Common myeloid progenitor, CD34-positive (primary cell): ENCODE measurements at regions of chr2 and their contacts with region 1.

Region 1: DNA sequence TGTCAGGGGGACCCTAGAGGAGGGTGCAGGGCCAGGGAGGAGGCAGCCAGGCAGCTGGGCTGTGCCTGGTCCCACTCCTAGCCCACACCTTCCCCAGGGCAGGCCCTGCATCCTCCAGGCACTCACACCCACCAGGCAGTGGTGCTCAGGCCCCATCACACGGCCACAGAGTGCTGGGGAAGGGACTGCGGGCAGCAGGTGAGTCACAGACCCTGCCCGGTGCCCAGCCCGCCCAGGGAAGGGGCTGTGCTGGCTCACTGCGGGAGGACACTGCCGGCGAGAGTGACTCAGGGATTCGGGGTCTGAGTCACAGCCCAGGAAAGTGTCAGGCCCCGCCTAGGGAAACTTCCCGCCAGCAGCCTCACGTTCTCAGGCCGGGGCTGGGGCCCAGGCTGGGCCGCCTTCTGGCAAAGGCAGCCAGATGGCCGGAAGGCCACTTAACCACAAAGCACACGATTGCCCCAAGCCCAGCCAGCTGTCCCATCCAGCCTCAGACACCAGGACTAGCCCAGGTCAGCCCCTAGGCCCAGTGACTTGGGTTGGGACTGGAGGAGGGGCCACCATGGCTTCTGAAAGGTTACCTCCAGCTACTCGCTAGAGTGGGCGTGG is 42.2 kb downstream of the BIN1 start:
- DNase-seq: peak; percentile 93 to 99 (median 99)
- H3K4me3 ChIP-seq: peak overlapping the region in 1 of 7 experiments; percentile 18
- H3K27ac ChIP-seq: peak overlapping the region; percentile 33 to 69
- H3K4me1 ChIP-seq: peaks cover 0 to 80% (median 58%) of the 10 kb centered on the region in 4 experiments
- H3K27me3 ChIP-seq: no peaks in the 10 kb centered on the region

Region 2: DNA sequence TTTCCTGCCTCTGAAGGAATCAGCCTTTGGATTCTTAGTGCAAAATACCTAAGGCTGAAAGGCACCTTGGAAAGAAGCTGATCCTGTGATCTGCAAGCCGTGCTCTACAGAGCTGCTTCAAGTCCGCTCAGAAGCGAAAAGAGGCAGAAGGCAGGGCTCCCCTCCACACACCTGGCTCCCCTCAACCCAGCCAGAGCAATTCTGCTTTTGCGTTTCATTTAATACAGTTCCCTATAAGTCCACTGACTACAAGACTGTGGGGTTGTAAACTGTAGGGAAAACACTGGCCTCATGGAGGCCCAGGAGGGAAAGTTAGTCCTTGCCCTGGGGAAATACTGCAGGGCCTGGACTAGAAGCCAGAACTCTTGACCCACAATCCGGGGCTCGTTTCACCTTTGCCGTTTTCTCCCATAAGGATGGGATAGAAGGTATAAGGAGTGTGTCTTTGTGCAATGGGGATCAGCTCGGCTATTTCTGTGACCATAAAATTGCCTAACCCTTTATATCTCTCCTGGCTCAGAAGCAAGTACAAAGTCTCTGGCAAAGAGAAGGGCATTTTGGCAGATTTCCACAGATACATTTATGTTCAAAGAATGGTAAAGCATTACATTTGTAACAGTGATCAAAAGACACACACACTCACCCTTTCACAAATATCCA is 261.8 kb before region 1 on chr2:
- CTCF ChIA-PET with region 1: no interaction called
- POLR2A ChIA-PET with region 1: no interaction called
- DNase-seq: no peak
- H3K4me3 ChIP-seq: no peak overlapping the region
- H3K27ac ChIP-seq: no peak overlapping the region
- H3K4me1 ChIP-seq: no peaks in the 10 kb centered on the region
- H3K27me3 ChIP-seq: peaks cover 0 to 6% (median 0%) of the 10 kb centered on the region in 5 experiments

Region 3: DNA sequence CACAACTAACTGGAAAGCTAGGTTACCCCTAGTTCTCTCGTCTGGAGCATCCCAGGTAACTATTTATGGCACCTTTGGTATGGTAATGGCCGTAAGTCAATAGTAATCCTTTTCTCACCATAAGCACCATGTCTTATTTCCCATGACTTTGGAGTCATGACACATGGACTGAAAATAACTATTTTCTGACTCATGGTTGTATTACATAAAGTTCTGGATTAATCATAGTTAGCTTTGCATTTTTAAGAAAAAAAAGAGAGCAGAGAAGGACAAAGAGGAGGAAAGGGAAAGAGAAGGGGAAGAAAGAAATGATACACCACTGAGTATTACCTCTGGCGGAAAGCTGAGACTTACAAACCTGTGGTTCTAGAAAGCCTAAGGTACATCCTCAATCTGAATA is 57.1 kb before region 1 on chr2:
- CTCF ChIA-PET with region 1: no interaction called
- POLR2A ChIA-PET with region 1: no interaction called
- DNase-seq: no peak
- H3K4me3 ChIP-seq: no peak overlapping the region
- H3K27ac ChIP-seq: no peak overlapping the region
- H3K4me1 ChIP-seq: no peaks in the 10 kb centered on the region
- H3K27me3 ChIP-seq: peaks cover 0 to 2% (median 0%) of the 10 kb centered on the region in 5 experiments

Region 4: GRCh38 chr2:127034883-127035611 is 29.7 kb before region 1 on chr2:
- CTCF ChIA-PET with region 1: no interaction called
- POLR2A ChIA-PET with region 1: no interaction called
- DNase-seq: no peak
- H3K4me3 ChIP-seq: no peak overlapping the region
- H3K27ac ChIP-seq: no peak overlapping the region
- H3K4me1 ChIP-seq: peaks cover 0 to 3% (median 0%) of the 10 kb centered on the region in 4 experiments
- H3K27me3 ChIP-seq: no peaks in the 10 kb centered on the region

Region 5: DNA sequence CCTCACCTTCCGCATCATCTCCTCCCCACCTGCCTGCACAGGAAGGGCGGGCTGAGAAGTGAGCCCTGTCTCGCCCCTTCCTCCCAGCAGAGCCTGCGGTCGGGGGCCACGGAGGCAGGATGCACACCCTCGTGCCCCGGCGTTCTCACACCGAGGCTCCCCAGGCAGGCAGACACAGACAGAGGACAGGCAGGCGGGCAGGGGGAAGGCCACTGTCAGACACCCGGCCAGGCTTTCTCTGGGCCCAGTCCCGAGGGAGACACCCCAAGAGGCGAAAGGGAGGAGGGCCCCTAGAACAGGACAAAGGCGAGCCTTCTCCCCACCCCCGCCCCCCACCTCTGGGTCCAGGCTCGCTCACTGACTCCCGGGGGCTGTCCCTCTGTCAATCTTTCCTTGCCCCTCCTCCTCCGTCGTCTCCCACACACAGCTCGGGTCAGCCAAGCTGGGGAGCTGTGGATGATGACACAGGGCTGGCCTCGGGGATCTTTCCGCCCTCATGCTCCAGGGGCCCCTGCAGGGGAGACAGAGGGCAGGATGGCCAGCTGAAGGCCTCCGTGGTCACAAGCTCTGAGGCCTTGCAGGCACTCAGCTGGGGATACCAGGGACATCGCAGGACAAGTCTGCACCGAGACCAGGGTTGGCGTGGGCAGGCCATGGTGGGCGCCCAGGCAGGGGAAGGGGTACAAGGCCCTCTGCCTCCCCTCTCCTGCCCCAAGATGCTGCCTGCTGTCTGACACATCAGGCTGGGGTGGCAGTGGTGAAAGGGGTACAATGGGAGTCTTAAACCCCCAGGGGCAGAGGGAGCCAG is 17.3 kb after region 1 on chr2:
- CTCF ChIA-PET with region 1: interaction called, 404 read pairs
- POLR2A ChIA-PET with region 1: interaction called, 3 read pairs
- DNase-seq: peak; percentile 59 to 93 (median 86)
- H3K4me3 ChIP-seq: peak overlapping the region in 5 of 7 experiments; percentile 30 to 66 (median 55)
- H3K27ac ChIP-seq: peak overlapping the region; percentile 56 to 77
- H3K4me1 ChIP-seq: peaks cover 10 to 97% (median 86%) of the 10 kb centered on the region in 4 experiments
- H3K27me3 ChIP-seq: no peaks in the 10 kb centered on the region

Region 6: DNA sequence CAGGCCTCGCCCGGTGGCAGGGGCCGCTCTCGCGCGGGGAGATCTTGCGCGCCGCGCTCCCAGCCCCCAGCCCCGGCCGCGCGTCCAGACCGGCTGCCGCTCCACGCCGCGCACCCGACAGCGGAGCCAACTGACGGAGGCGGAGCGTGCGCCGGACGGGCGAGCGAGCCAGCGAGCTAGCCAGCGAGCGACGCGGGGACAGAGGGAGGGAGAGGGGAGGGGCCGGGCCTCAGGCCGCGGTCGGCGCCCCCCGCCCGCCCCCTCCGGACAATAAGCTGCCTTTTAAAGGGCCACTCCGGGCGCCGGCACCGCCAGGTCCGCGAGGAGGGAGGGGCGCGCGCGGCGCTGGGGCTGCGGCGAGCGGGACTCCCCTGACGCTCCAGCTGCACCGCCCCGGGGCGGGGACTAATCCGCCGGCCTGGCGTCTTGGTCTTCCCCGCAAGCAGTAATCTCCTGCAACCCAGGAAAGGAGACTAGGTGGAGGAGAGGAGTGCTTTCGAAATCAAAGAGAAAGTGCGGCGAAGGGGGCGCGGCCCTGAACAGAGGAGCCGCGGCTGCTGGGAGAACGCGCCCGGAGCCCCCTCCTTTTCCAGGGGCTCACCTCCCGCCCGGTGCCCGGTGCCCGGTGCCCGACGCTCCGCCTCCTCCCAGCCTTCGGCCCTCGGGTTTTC is 42.3 kb after region 1 on chr2 and contains the start of gene BIN1:
- CTCF ChIA-PET with region 1: interaction called, 404 read pairs
- POLR2A ChIA-PET with region 1: no interaction called
- DNase-seq: peak; percentile 80 to 90 (median 87)
- H3K4me3 ChIP-seq: peak within 1 kb of the TSS; percentile 70 to 87 (median 82)
- H3K27ac ChIP-seq: no peak within 1 kb of the TSS
- H3K4me1 ChIP-seq: peaks cover 0 to 71% (median 27%) of the 10 kb centered on the region in 4 experiments
- H3K27me3 ChIP-seq: no peaks in the 10 kb centered on the region

Region 7: DNA sequence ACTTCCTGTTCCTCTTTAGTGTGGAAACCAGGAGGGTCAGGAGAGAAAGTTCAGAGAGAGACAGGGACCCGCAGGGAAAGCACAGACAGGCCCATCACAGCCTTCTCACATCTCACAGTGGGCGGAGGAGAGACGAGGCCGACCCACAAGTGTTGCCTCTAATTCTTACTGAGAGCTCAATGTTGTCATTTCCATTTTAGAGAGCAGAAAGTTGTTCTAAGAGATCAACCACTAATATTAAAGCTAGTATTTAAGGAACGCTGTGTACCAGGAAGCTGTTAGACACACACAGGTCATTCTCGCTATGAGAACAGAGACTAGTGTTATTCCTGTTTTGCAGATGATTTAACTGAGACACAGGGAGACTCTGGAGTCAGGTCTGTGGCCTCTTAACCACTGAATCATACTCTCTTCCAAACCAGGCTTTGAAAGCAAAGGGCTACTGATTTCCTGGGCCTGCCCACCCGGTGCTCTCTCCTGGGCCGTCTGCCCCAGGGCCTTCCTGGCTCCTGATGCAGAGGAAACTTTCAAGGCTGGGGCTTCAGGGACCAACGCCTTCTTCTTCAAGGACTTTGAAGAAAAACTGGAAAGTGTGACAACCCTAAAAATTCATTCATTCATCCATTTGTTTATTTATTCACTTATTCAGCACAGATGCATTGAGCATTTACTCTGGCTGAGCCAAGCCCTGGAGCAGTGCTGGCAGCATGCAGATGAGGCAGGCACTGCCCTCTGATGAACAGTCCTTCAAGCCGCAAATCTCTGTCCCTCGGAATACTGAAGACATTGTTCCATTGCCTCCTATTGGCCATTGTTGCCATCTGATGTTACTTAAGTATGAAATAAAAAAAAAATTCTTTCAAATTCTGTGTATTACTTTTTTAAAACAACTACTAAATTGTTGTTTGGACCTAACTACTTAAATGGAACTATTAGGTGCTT is 79.4 kb after region 1 on chr2:
- CTCF ChIA-PET with region 1: interaction called, 10 read pairs
- POLR2A ChIA-PET with region 1: no interaction called
- DNase-seq: no peak
- H3K4me3 ChIP-seq: no peak overlapping the region
- H3K27ac ChIP-seq: no peak overlapping the region
- H3K4me1 ChIP-seq: peaks cover 0 to 9% (median 2%) of the 10 kb centered on the region in 4 experiments
- H3K27me3 ChIP-seq: no peaks in the 10 kb centered on the region

Region 8: GRCh38 chr2:127174136-127174535 is 109.4 kb after region 1 on chr2:
- CTCF ChIA-PET with region 1: interaction called, 56 read pairs
- POLR2A ChIA-PET with region 1: interaction called, 3 read pairs
- DNase-seq: no peak
- H3K4me3 ChIP-seq: no peak overlapping the region
- H3K27ac ChIP-seq: no peak overlapping the region
- H3K4me1 ChIP-seq: no peaks in the 10 kb centered on the region
- H3K27me3 ChIP-seq: no peaks in the 10 kb centered on the region

Region 9: DNA sequence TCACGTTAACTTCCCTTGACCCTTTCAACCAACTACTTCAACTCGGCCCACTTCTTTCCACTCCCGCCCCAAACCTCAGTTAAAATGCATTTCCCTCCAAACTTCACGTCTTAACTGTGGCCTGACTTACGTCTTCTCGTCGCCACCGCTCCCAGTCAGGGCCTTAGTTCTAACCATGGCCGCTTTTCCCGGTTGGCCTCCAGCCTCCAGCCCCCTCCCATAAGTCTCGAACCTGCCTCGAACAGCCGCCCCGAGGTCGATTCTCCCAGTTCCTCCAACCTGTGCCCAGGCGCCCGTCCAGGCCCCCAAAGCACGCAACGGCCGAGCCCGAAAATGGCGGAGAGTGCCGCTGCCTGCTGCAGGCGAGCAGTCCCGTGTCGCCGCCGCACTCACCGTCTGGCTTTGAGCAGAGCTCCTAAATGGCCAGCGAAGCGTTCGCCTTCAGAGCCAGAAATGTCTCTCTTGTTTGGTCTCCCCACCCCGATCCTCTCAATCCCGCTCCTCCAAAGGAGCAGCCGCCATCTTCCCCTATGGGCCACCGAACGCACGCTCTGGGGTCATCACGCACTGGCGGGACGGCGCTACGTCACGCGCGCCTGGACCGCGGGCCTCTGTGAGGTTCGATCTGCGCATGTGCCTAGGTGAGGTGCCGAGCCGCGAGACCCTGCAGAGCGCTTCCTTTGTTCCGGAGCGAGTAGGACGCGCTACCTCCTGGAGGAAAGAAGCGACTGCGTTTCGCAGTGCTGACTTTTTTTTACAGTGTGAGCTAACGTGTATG is 746.1 kb after region 1 on chr2 and contains the start of gene WDR33:
- CTCF ChIA-PET with region 1: no interaction called
- POLR2A ChIA-PET with region 1: no interaction called
- DNase-seq: peak; percentile 93 to 97 (median 96)
- H3K4me3 ChIP-seq: peak within 1 kb of the TSS; percentile 72 to 99 (median 88)
- H3K27ac ChIP-seq: peak within 1 kb of the TSS; percentile 95 to 99
- H3K4me1 ChIP-seq: peaks cover 14 to 34% (median 20%) of the 10 kb centered on the region in 4 experiments
- H3K27me3 ChIP-seq: no peaks in the 10 kb centered on the region